B cell (primary cell): ENCODE measurements at regions of chr17 and their contacts with region 1.

Region 1: DNA sequence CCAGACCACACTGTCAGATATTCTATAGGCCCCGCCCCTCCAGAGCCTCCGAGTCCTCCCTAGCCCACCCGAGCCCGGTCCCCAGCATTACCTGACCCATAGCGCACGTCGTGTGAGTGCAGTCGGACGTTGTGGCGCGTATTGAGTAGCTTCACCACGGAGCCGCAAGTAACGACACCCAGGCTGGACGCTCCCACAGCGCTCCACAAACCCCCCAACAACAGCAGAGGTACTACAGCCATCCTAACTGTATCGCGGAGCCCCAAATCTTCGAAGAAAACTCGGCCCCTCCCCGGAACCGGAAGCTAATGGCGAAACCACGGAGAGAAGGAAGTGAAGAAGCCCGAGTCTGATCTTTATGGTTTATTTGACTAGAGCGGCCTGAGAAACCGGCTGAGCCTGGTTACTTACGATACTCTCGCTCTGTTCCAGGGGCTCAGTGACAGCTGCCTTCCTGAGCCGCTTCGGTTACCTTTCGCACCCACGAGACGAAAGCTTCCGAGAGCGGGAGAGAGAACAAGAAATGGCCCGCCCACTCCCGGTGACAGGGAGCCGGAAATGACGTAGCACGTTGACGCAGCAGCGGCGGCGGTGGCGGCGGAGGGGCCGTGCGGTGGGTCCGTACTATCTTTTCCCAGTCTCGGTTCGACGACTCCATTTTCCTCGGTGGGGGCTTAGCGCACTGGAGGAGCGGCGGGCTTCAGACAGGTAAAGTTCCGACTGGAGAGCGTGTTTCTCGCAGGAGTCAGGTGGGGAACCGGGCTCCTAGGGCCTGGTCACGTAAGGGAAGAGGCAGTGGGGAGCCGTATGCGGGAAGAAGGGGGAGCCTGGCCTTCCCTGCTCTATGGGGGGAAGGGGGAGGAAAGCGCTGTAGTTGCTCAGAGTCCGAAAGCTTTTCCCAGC is at the starts of genes SDF2 and SUPT6H:
- DNase-seq: peak; percentile 97
- ATAC-seq: peak; percentile 84
- H3K4me3 ChIP-seq: peak within 1 kb of the TSS; percentile 85 to 100 (median 99)
- H3K4me3 Mint-ChIP-seq: peak within 1 kb of the TSS; percentile 99
- H3K27ac ChIP-seq: peak within 1 kb of the TSS; percentile 90 to 99
- H3K27ac Mint-ChIP-seq: peak within 1 kb of the TSS; percentile 100
- H3K4me1 ChIP-seq: peaks cover 22 to 29% of the 10 kb centered on the region in 2 donors
- H3K4me1 Mint-ChIP-seq: peaks cover 57% of the 10 kb centered on the region
- H3K27me3 ChIP-seq: no peaks in the 10 kb centered on the region
- H3K27me3 Mint-ChIP-seq: no peaks in the 10 kb centered on the region
- CTCF ChIP-seq: no peak
- total RNA-seq, gene SDF2: 38.1 and 40.4 TPM in 2 replicates
- total RNA-seq, gene SUPT6H: 110 and 119 TPM in 2 replicates

Region 2: DNA sequence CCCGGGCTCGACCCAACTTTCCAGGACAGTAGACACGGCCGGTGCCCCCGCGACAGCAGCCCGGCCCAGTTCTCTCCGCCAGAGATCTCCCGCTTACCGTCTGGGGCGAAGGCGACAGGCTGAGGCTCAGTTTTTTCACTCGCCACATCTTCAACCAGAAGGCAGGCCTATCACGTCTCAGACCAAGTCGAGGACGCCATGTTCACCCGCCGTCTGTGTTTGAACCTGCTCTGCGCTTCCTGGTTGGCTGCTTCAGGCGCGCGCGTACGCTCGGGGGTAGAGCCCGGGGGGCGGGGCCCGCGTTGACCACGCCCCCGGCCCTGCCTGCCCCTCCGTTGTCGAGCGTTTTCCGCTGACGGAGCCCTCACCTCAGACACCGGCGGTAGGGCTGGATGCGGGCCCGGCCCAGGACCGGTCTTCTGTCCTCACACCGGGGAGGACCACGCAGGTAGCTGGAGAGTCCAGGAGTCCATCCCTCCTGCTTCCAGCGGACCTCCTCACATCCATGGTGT is 63.0 kb before region 1 on chr17 and contains the start of gene SPAG5:
- CTCF ChIA-PET with region 1: no interaction called
- POLR2A ChIA-PET with region 1: no interaction called
- intact Hi-C with region 1: loop called (anchors 1 kb)
- DNase-seq: peak; percentile 96
- ATAC-seq: peak; percentile 92
- H3K4me3 ChIP-seq: peak within 1 kb of the TSS; percentile 72 to 90 (median 79)
- H3K4me3 Mint-ChIP-seq: peak within 1 kb of the TSS; percentile 98
- H3K27ac ChIP-seq: peak within 1 kb of the TSS; percentile 95 to 98
- H3K27ac Mint-ChIP-seq: peak within 1 kb of the TSS; percentile 98
- H3K4me1 ChIP-seq: peaks cover 19% of the 10 kb centered on the region in 2 donors
- H3K4me1 Mint-ChIP-seq: peaks cover 24% of the 10 kb centered on the region
- H3K27me3 ChIP-seq: no peaks in the 10 kb centered on the region
- H3K27me3 Mint-ChIP-seq: no peaks in the 10 kb centered on the region
- CTCF ChIP-seq: no peak
- total RNA-seq, gene SPAG5: 8.0 and 10.1 TPM in 2 replicates

Region 3: GRCh38 chr17:28675980-28676379 is 14.1 kb after region 1 on chr17:
- CTCF ChIA-PET with region 1: interaction called, 4 read pairs
- POLR2A ChIA-PET with region 1: interaction called, 10 read pairs
- intact Hi-C with region 1: no loop called
- DNase-seq: peak; percentile 27
- ATAC-seq: no peak
- H3K4me3 ChIP-seq: no peak overlapping the region
- H3K4me3 Mint-ChIP-seq: no peak overlapping the region
- H3K27ac ChIP-seq: no peak overlapping the region
- H3K27ac Mint-ChIP-seq: peak overlapping the region; percentile 16
- H3K4me1 ChIP-seq: no peaks in the 10 kb centered on the region
- H3K4me1 Mint-ChIP-seq: no peaks in the 10 kb centered on the region
- H3K27me3 ChIP-seq: no peaks in the 10 kb centered on the region
- H3K27me3 Mint-ChIP-seq: no peaks in the 10 kb centered on the region
- CTCF ChIP-seq: peak; percentile 45

Region 4: GRCh38 chr17:28693869-28694268 is 32.0 kb after region 1 on chr17:
- CTCF ChIA-PET with region 1: no interaction called
- POLR2A ChIA-PET with region 1: no interaction called
- intact Hi-C with region 1: no loop called
- DNase-seq: no peak
- ATAC-seq: no peak
- H3K4me3 ChIP-seq: no peak overlapping the region
- H3K4me3 Mint-ChIP-seq: no peak overlapping the region
- H3K27ac ChIP-seq: no peak overlapping the region
- H3K27ac Mint-ChIP-seq: no peak overlapping the region
- H3K4me1 ChIP-seq: no peaks in the 10 kb centered on the region
- H3K4me1 Mint-ChIP-seq: no peaks in the 10 kb centered on the region
- H3K27me3 ChIP-seq: no peaks in the 10 kb centered on the region
- H3K27me3 Mint-ChIP-seq: no peaks in the 10 kb centered on the region
- CTCF ChIP-seq: no peak

Region 5: DNA sequence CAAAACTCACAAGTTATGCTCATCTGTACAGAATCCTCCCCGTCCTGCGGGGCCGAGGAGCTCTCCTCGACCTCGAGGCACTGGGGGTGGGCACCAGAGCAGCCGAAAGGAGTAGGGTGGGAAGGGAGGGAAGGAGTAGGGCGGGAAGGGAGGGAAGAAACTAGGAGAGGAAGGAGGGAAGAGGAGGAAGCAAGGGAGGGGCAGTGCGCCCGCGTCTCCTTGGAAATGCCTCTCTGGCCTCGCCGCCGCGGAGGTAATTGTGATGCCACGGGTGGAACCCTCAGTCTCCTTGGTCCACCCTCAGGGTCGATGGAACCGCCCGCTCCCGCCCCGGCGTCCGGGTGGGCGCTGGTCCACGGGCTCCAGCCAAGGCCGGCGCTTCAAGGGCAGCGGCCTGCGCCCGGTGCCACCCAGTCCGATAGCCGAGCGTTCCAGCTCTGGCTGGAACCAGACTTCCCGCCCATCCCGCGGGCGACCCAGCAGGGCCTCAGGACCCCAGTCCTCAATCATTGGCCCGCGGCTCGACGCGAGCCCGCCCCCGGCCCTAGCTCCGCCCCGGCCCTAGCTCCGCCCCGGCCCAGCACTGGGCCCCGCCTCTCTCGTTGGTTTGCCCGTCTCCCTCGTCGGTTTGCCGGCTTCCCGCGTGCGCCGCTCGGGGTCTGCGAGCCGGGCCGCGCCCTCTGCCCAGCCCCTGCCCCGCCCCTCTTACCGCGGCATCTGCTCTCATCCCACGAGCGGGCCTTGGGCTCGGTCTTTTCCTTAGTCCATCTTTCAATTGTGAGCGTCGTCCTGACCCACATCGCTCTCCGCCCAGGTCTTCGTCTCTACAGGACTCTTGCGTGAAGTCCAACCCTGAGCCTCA is 49.2 kb after region 1 on chr17:
- CTCF ChIA-PET with region 1: no interaction called
- POLR2A ChIA-PET with region 1: interaction called, 14 read pairs
- intact Hi-C with region 1: loop called (anchors 1 kb)
- DNase-seq: peak; percentile 88
- ATAC-seq: peak; percentile 90
- H3K4me3 ChIP-seq: peak overlapping the region; percentile 54 to 88 (median 73)
- H3K4me3 Mint-ChIP-seq: peak overlapping the region; percentile 96
- H3K27ac ChIP-seq: peak overlapping the region; percentile 69 to 79
- H3K27ac Mint-ChIP-seq: peak overlapping the region; percentile 93
- H3K4me1 ChIP-seq: peaks cover 9 to 18% of the 10 kb centered on the region in 2 donors
- H3K4me1 Mint-ChIP-seq: peaks cover 19% of the 10 kb centered on the region
- H3K27me3 ChIP-seq: no peaks in the 10 kb centered on the region
- H3K27me3 Mint-ChIP-seq: no peaks in the 10 kb centered on the region
- CTCF ChIP-seq: no peak

Region 6: GRCh38 chr17:28717578-28718333 is 55.9 kb after region 1 on chr17 and contains the start of gene RAB34:
- CTCF ChIA-PET with region 1: no interaction called
- POLR2A ChIA-PET with region 1: interaction called, 3 read pairs
- intact Hi-C with region 1: loop called (anchors 1 kb)
- DNase-seq: peak; percentile 70
- ATAC-seq: peak; percentile 18
- H3K4me3 ChIP-seq: peak within 1 kb of the TSS in 4 of 5 experiments; percentile 46 to 61 (median 52)
- H3K4me3 Mint-ChIP-seq: peak within 1 kb of the TSS; percentile 86
- H3K27ac ChIP-seq: peak within 1 kb of the TSS; percentile 56 to 71
- H3K27ac Mint-ChIP-seq: peak within 1 kb of the TSS; percentile 89
- H3K4me1 ChIP-seq: peaks cover 44 to 57% of the 10 kb centered on the region in 2 donors
- H3K4me1 Mint-ChIP-seq: peaks cover 45% of the 10 kb centered on the region
- H3K27me3 ChIP-seq: peaks cover 0 to 8% (median 2%) of the 10 kb centered on the region in 4 experiments
- H3K27me3 Mint-ChIP-seq: no peaks in the 10 kb centered on the region
- CTCF ChIP-seq: no peak
- total RNA-seq, gene RAB34: 18.0 and 20.5 TPM in 2 replicates